Left cardiac atrium (tissue), 4 donors: ENCODE measurements at regions of chr18 and their contacts with region 1.

Region 1: GRCh38 chr18:38539373-38539772 is 973.8 kb upstream of the CELF4 start:
- DNase-seq: no peak
- ATAC-seq: no peak

Region 2: DNA sequence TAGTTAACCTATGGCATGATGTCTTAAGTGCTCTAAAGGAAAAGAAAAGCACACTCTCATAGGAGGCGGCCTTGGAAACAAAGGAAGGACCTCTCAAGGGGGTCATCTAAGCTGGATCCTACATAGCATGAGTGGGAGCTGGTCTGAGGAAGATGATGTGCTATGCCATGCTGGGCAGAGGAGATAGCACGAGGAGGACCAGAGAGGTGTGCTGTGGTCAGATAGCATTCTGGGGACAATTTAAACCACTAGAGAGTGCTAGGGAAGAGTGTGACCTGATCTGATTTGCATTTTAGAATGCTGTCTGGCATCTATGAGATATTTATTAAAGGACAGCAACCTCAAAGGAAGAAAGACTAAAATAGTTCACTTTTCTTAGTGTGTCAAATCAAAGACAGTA is 63.7 kb before region 1 on chr18:
- intact Hi-C with region 1: loop called in 1 of 2 experiments (anchors 10 kb)
- DNase-seq: no peak
- ATAC-seq: no peak